IMR-90 (cell line): ENCODE measurements at regions of chr21 and their contacts with region 1.

Region 1: GRCh38 chr21:35814858-35815619 is 245.3 kb downstream of the SETD4 start:
- DNase-seq: no peak
- ATAC-seq: no peak
- H3K4me3 ChIP-seq: no peak overlapping the region
- H3K27ac ChIP-seq: no peak overlapping the region
- H3K4me1 ChIP-seq: no peaks in the 10 kb centered on the region
- H3K27me3 ChIP-seq: no peaks in the 10 kb centered on the region; the same call in 1 of the 2 replicates
- CTCF ChIP-seq: no peak
- POLR2A ChIP-seq: no peak
- RAD21 ChIP-seq: no peak

Region 2: DNA sequence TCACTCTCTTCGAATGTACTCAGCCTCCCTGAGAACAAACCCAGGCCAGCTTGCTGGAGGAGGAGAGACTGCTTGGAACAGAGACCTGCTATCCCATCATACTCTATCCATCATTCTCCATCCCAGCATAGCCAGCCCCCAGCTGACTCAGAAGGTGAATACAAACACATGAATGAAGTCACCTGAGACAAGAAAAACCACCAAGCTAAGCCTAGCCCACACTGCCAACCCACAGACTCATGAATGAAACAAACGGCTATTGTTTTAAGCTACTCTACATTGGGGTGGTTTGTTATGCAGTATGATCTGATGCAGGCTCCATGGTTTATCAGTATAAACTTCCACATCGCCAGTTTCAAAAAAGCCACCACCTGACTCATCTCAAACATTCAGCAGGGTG is 150.4 kb before region 1 on chr21:
- CTCF ChIA-PET with region 1: no interaction called
- POLR2A ChIA-PET with region 1: no interaction called
- dilution Hi-C with region 1: no loop called
- in situ Hi-C with region 1: no loop called
- intact Hi-C with region 1: loop called (anchors 5 kb)
- DNase-seq: peak; percentile 77
- ATAC-seq: peak; percentile 40; the same call in 1 of the 2 replicates
- H3K4me3 ChIP-seq: no peak overlapping the region
- H3K27ac ChIP-seq: no peak overlapping the region
- H3K4me1 ChIP-seq: no peaks in the 10 kb centered on the region
- H3K27me3 ChIP-seq: no peaks in the 10 kb centered on the region
- CTCF ChIP-seq: no peak
- POLR2A ChIP-seq: no peak
- RAD21 ChIP-seq: no peak